Panc1 (cell line): ENCODE measurements at regions of chr2 and their contacts with region 1.

Region 1: GRCh38 chr2:56183643-56184499 is at the start of gene CCDC85A:
- DNase-seq: peak; percentile 30
- ATAC-seq: peak; percentile 96
- H3K4me3 ChIP-seq: peak within 1 kb of the TSS; percentile 54 to 56
- H3K27ac ChIP-seq: no peak within 1 kb of the TSS
- H3K4me1 ChIP-seq: no peaks in the 10 kb centered on the region
- H3K27me3 ChIP-seq: peaks cover 25% of the 10 kb centered on the region
- CTCF ChIP-seq: peak; percentile 97
- total RNA-seq, gene CCDC85A: 0.05 TPM

Region 2: GRCh38 chr2:56749152-56749752 is 565.4 kb after region 1 on chr2:
- CTCF ChIA-PET with region 1: no interaction called
- POLR2A ChIA-PET with region 1: no interaction called
- in situ Hi-C with region 1: no loop called
- intact Hi-C with region 1: loop called (anchors 2 kb)
- DNase-seq: peak; percentile 25
- ATAC-seq: no peak
- H3K4me3 ChIP-seq: no peak overlapping the region
- H3K27ac ChIP-seq: no peak overlapping the region
- H3K4me1 ChIP-seq: no peaks in the 10 kb centered on the region
- H3K27me3 ChIP-seq: no peaks in the 10 kb centered on the region
- CTCF ChIP-seq: peak; percentile 38; the same call in 1 of the 2 replicates

Region 3: GRCh38 chr2:57497489-57498096 is 1313.7 kb after region 1 on chr2:
- CTCF ChIA-PET with region 1: interaction called, 3 read pairs
- POLR2A ChIA-PET with region 1: no interaction called
- in situ Hi-C with region 1: no loop called
- intact Hi-C with region 1: loop called (anchors 5 kb)
- DNase-seq: peak; percentile 28
- ATAC-seq: 0 out of 2 replicates have a peak, but pooled peaks have one; percentile 53
- H3K4me3 ChIP-seq: no peak overlapping the region
- H3K27ac ChIP-seq: no peak overlapping the region
- H3K4me1 ChIP-seq: no peaks in the 10 kb centered on the region
- H3K27me3 ChIP-seq: no peaks in the 10 kb centered on the region
- CTCF ChIP-seq: peak; percentile 87

Region 4: DNA sequence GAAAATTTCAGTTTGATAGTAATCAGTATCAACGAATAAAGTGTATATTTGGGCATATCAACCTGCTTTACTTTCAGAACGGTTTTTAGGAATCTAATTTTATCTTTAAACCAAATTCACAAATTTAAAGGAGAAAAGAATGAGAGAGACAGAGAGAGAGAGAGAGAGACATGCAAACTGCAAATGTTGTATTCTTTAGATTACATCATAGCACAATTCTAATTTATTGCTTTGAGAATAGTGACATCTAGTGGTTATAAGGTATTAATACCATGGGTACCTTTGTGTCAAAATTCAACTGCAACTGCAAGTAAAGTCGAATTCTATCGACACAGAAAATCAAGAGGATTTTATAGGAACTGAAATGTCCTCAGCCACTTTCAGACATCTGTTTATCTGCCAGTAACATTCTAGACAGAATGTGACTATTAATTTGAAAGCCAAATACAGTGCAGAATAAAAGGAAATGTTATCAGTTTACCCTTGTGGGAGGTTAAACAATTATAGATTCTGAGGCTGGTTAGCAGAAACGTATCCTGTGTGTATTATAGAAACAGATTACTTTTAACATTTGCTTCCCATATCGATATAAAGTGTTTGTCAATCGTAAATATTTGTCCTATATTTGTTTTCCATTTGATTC is 1332.9 kb after region 1 on chr2:
- CTCF ChIA-PET with region 1: no interaction called
- POLR2A ChIA-PET with region 1: no interaction called
- in situ Hi-C with region 1: no loop called
- intact Hi-C with region 1: loop called (anchors 5 kb)
- DNase-seq: peak; percentile 28
- ATAC-seq: no peak
- H3K4me3 ChIP-seq: no peak overlapping the region
- H3K27ac ChIP-seq: no peak overlapping the region
- H3K4me1 ChIP-seq: no peaks in the 10 kb centered on the region; the same call in 1 of the 2 replicates
- H3K27me3 ChIP-seq: no peaks in the 10 kb centered on the region
- CTCF ChIP-seq: peak; percentile 55; the same call in 1 of the 2 replicates